Ascending aorta (tissue), 2 donors: ENCODE measurements at regions of chrX and their contacts with region 1.

Region 1: GRCh38 chrX:86047174-86047935 is at the start of gene CHM:
- DNase-seq: peak; percentile 13 to 84
- H3K4me3 ChIP-seq: peak within 1 kb of the TSS; percentile 53 to 63
- H3K27ac ChIP-seq: peak within 1 kb of the TSS; percentile 68 to 78
- H3K4me1 ChIP-seq: peaks cover 0 to 2% of the 10 kb centered on the region in 2 donors
- H3K27me3 ChIP-seq: no peaks in the 10 kb centered on the region
- CTCF ChIP-seq: no peak
- total RNA-seq, gene CHM: 6.3 TPM

Region 2: GRCh38 chrX:86148024-86148511 is 100.7 kb after region 1 on chrX and contains the start of gene DACH2:
- intact Hi-C with region 1: loop called (anchors 5 kb)
- DNase-seq: peak; percentile 18 to 84
- H3K4me3 ChIP-seq: peak within 1 kb of the TSS; percentile 45 to 55
- H3K27ac ChIP-seq: no peak within 1 kb of the TSS
- H3K4me1 ChIP-seq: no peaks in the 10 kb centered on the region
- H3K27me3 ChIP-seq: no peaks in the 10 kb centered on the region
- CTCF ChIP-seq: no peak
- total RNA-seq, gene DACH2: not detected